ENCODE measurements at regions of chr10 and their contacts with region 1.

Region 1: GRCh38 chr10:101012525-101013364 is 13.1 kb downstream of the LZTS2 start:
- DNase-seq: peak; percentile 84
- H3K4me3 Mint-ChIP-seq: no peak overlapping the region
- H3K27ac Mint-ChIP-seq: peak overlapping the region; percentile 66
- H3K4me1 Mint-ChIP-seq: peaks cover 10% of the 10 kb centered on the region
- H3K27me3 Mint-ChIP-seq: peaks cover 34% of the 10 kb centered on the region
- CTCF ChIP-seq: peak; percentile 61

Region 2: GRCh38 chr10:100969187-100970075 is 43.3 kb before region 1 on chr10 and contains the start of gene SEMA4G:
- CTCF ChIA-PET with region 1: interaction called, 5 read pairs
- intact Hi-C with region 1: loop called (anchors 5 kb)
- DNase-seq: peak; percentile 58
- H3K4me3 Mint-ChIP-seq: peak within 1 kb of the TSS; percentile 80
- H3K27ac Mint-ChIP-seq: peak within 1 kb of the TSS; percentile 57
- H3K4me1 Mint-ChIP-seq: peaks cover 19% of the 10 kb centered on the region
- H3K27me3 Mint-ChIP-seq: no peaks in the 10 kb centered on the region
- CTCF ChIP-seq: peak; percentile 81
- total RNA-seq, gene SEMA4G: 15.9 and 20.6 TPM in 2 replicates

Region 3: DNA sequence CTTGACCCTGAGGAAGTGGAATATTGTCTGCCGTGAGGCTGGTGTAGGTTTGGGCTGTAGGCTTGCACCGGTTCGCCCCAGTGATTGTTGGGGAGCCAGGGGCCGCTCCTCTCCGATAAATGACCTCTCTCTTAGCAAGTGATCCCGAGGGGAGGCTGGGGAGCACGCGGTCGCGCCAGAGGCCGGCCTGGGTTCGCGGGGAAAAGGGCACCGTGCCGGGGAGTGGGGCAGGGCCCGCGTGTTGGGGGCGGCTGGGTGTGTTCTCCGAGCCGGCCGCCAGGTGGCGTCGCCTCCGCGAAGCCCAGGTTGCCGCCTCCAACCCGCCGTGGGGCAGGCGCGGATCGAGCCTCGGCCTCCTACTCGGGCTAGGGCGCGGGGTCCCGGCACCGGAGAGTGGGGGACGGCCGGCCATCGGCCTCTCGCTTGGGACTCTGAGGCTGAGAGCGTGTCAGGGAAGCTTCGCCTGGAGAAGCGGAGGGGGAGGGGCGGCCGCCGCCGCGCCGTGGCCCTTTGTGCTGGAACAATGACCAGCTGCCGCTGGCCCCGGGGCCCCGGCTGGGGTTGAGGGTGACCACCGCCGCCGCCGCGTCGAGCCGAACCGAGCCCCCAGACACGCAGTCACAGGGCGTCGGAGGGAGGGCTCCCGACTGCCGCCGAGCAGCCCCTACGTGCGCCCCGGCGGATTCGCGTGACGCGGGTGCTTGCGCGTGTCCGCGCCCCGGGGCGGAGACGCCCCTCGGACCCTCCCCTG is 13.6 kb before region 1 on chr10:
- CTCF ChIA-PET with region 1: interaction called, 17 read pairs
- intact Hi-C with region 1: loop called (anchors 2 kb)
- DNase-seq: peak; percentile 74
- H3K4me3 Mint-ChIP-seq: peak overlapping the region; percentile 70
- H3K27ac Mint-ChIP-seq: peak overlapping the region; percentile 69
- H3K4me1 Mint-ChIP-seq: peaks cover 14% of the 10 kb centered on the region
- H3K27me3 Mint-ChIP-seq: no peaks in the 10 kb centered on the region
- CTCF ChIP-seq: peak; percentile 84

Region 4: DNA sequence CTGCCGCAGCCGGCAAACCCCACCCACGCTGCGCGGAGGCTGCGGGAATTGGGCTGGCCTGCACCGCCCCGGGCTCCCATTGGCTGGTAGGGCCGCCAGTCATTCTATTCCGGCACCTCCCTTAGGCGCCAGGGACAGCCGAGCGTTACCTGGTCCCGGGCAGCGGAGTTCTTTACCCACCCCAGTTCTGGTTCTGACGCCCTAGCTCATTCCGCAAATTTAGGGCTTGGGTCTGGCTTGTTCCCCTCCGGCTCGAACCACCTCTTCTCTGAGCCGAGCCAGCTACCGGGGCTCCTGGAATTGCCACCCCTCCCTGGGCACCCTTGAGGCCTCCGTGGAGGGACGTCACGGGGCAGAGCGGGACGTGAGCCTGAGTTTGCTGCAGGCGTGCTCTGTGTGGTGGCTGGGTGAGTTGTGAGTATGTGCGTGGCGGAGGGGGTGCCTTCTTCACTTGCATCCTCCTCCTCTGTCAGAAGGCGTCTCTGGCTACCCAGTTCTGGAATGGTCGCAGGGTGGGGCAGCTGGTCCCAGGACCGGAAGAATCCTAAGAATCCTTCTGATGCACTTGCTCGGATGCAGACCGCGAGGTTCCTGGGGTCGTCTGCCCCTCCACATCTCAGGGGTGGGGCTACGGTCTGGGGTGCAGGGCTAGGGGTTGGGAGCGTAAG is 18.5 kb after region 1 on chr10 and contains the starts of genes PDZD7 and SFXN3:
- CTCF ChIA-PET with region 1: interaction called, 10 read pairs
- intact Hi-C with region 1: no loop called
- DNase-seq: peak; percentile 95
- H3K4me3 Mint-ChIP-seq: peak within 1 kb of the TSS; percentile 78
- H3K27ac Mint-ChIP-seq: peak within 1 kb of the TSS; percentile 73
- H3K4me1 Mint-ChIP-seq: peaks cover 8% of the 10 kb centered on the region
- H3K27me3 Mint-ChIP-seq: no peaks in the 10 kb centered on the region
- CTCF ChIP-seq: no peak
- total RNA-seq, gene PDZD7: 1.2 and 1.3 TPM in 2 replicates
- total RNA-seq, gene SFXN3: 27.5 and 37.7 TPM in 2 replicates

Region 5: DNA sequence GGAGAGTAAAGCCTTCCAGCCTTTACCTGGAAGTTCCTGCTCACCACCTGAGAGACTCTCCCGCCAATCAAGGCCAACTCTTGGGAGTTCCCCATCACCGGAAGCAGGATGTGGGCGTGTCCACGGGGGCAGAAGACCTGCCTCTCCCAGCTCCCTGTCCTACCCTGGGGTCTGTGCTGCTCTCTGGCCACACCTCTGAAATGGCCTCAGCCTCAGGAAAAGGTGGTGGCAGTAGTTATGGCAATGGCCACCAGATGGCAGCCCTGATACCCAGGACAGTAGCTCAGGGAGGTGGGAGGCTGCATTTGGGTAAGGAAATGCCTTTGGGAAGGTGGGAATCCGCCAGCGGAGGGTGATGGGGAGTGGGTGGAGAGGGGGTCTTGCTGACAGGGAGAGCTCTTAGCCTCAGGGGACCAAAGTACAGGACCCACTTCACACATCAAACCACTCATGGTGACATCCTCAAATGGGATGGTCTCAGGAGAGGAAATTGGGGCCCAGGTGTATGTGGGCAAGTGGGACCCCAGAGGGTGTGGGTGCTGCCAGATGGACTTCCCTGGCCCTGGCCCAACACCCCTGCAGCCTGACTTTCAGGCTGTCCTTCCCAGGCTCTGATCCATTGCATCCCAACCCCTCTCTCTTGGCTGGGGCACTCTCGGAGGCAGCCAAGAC is 82.9 kb after region 1 on chr10:
- CTCF ChIA-PET with region 1: no interaction called
- intact Hi-C with region 1: no loop called
- DNase-seq: peak; percentile 84
- H3K4me3 Mint-ChIP-seq: no peak overlapping the region
- H3K27ac Mint-ChIP-seq: no peak overlapping the region
- H3K4me1 Mint-ChIP-seq: peaks cover 9% of the 10 kb centered on the region
- H3K27me3 Mint-ChIP-seq: peaks cover 53% of the 10 kb centered on the region
- CTCF ChIP-seq: peak; percentile 65

Region 6: DNA sequence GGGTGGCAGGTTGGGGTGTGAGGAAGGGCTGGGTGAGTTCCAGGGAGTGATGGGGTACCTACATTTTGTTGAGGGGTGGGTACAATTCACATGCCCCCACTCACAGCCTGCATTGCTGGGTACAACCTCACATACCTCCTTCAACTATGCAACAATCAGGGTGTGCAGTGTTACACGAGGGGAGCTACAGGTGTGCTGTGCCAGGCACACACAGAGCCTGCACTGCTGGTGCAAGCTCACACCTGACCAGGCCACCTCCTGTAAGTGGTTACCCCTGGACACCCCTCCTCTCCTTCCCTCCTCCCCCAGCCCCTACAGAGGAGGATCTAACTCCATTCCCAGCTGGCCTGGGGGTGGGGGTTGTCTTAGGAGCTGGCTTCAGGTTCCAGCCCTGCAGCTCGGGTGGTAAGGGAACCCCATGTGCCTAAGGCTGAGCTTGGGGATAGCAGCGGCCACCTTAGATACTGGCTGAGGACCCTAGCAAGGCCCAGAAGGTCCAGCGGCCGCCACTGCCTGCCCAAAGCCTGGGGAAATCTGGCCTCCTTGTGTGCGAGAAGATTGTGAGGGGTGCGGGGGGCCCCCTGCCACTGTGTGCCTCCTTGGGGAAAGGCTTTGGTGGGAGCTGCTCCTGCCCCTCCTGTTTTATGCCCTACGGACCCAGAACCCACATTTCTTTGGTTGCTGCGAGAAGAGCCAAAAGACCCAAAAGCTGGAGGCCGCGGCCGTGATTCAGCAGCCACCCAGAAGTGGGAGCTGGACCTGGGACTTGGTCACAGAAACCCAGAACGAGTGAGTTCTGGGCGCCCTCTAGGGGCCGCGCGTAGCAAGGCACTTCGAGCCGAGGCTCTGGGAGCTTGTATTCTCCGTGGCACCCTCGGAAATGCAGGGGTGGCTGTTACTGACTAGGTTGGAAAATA is 129.1 kb after region 1 on chr10:
- CTCF ChIA-PET with region 1: no interaction called
- intact Hi-C with region 1: no loop called
- DNase-seq: peak; percentile 83
- H3K4me3 Mint-ChIP-seq: no peak overlapping the region
- H3K27ac Mint-ChIP-seq: no peak overlapping the region
- H3K4me1 Mint-ChIP-seq: peaks cover 11% of the 10 kb centered on the region
- H3K27me3 Mint-ChIP-seq: peaks cover 60% of the 10 kb centered on the region
- CTCF ChIP-seq: peak; percentile 72

Measured in Calu3 (cell line).